Cardiac septum (tissue), 1 donor: ENCODE measurements at regions of chr5 and their contacts with region 1.

Region 1: GRCh38 chr5:170638454-170639220 is 134.8 kb downstream of the KCNIP1 start:
- DNase-seq: peak; percentile 80

Region 2: GRCh38 chr5:170225326-170226128 is 413.1 kb before region 1 on chr5:
- intact Hi-C with region 1: loop called (anchors 10 kb)
- DNase-seq: no peak

Region 3: DNA sequence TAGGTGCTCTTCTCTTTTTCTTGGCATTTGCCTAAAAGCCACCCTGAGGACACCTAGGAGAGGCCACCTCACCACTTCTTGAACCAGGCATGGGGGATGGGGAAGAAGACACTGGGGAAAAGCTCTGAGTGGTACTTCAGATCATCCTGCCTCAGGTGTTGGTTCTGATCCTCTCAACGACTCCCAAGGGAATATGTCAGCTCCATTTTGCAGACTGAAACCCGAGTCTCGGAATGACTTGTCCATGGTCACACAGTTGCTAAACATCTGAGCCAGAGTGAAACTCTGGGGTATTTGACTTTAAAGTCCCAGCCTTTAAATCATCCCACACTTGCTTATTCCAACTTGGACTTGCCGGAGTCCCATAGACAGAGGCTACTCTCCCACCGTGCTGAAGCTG is 24.3 kb after region 1 on chr5:
- intact Hi-C with region 1: no loop called
- DNase-seq: no peak

Region 4: GRCh38 chr5:170722316-170722715 is 83.7 kb after region 1 on chr5:
- intact Hi-C with region 1: no loop called
- DNase-seq: no peak

Region 5: GRCh38 chr5:170740551-170741205 is 102.0 kb after region 1 on chr5:
- intact Hi-C with region 1: loop called (anchors 5 kb)
- DNase-seq: no peak

Region 6: DNA sequence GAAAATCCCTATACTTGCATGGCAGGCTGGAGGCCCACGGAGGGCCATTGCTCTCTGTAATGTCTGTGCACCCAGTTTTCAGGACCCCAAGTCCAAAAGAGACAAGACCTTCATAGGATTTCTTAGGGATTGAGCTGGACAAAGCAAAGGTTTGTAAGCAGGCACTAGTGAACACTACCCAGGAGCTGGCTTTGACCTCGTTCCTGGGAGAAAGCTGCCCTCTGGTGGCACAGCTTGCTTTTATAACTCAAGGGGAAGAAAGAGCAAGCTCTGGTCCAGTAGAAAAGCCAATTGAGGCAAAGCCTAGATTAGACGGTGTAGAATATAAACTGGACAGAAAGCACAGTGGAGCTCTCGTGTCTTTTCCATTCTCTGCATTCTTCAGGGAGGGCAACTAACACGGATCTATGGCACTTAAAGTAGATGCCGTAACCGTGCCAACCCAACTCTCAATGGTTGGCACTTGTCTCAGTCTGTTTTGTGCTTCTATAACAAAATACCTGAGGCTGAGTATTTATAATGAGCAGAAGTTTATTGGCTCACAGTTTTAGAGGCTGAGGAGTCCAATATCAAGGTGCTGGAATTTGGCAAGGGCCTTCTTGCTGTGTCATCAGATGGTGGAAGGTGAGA is 152.8 kb after region 1 on chr5:
- intact Hi-C with region 1: loop called (anchors 2 kb)
- DNase-seq: peak; percentile 84

Region 7: DNA sequence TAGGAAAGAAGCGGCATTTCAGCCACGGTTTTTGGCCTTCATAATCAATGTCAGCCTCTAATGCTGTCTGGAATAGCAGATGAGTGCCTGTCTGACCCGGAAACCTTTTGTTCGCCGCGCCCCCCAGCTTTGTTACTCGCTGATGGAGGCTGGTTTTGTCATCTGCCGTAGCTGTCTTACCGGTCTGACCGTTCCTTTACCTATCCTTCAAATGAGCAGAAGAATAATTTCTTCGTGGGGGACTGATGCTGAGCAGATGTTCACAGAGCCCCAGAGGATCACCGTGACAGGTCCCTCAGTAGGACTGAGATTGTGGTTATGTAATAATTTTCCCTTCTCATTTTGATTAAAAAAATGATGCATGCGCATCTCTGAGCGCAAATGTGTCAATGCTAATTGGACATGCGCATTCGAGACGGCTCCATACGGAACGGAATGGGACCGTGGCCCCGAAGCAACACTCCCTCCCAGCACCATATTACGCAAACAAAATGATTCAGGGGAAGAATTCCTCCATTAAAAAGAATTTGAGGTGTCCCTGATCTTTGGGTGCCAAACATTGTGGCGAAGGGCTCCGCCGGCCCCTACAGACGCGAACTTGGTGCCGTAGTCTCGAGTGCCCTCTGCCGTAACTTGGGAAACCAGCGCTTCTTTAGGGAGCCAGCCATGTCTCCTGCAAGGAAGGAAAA is 698.0 kb after region 1 on chr5:
- intact Hi-C with region 1: loop called (anchors 5 kb)
- DNase-seq: no peak

Region 8: GRCh38 chr5:171580502-171581265 is 942.0 kb after region 1 on chr5:
- intact Hi-C with region 1: no loop called
- DNase-seq: no peak